GM12878 (cell line): ENCODE measurements at regions of chr7 and their contacts with region 1.

Region 1: DNA sequence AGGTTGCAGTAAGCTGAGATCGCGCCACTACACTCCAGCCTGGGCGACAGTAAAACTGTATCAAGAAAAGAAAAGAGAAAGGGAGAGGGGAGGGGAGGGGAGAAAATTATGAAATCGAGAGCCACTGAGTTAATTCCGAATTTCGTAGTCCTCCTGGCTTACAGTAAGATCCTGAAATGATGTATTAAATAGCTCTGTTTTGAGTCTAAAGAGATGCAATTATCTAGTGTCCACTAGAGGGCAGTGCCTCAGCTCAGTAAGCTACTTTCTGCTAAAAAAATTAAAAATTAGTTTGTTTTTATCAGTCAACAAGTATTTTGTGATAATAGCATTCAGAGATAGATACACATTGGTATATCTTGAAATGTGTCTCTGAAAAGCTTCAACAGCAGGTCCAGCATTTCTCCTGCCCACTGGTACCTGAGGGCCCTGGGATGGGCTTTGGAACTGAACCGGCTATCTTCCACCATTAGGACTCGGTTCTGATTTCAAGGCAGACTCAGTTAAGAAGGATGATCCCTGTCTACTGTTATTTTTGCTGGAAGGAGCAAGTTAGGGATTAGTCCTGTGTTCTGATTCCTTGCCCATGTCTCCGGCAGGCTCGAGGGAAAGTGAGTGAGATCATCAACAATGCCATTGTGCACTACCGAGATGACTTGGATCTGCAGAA is 19.5 kb downstream of the TSPAN33 start:
- DNase-seq: no peak
- ATAC-seq: peak; percentile 40
- H3K4me3 ChIP-seq: no peak overlapping the region
- H3K27ac ChIP-seq: no peak overlapping the region
- H3K4me1 ChIP-seq: peaks cover 57% of the 10 kb centered on the region
- H3K27me3 ChIP-seq: no peaks in the 10 kb centered on the region
- CTCF ChIP-seq: peak; percentile 61 to 78 (median 64)
- EP300 ChIP-seq: no peak
- POLR2A ChIP-seq: no peak
- RAD21 ChIP-seq: peak; percentile 60; the same call in 1 of the 2 replicates

Region 2: DNA sequence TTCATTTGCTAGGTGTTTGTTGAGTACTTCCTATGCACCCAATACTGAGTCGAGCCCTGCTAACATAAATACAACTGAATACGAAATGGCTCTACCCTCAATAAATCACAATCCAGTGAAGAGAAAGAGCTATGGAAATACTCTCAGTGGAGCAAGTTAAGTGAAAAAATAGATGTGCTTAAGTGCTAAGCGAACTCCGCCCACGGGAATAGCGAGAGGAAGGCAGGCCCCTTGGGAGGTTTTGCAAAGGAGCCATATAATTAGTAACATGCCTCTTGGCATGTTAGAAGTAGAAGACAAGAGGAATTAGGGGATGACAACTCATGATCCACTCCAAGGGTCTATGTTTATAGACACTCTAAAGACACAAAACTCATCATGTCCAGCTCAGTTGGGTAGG is 62.3 kb before region 1 on chr7:
- CTCF ChIA-PET with region 1: interaction called, 34 read pairs
- POLR2A ChIA-PET with region 1: interaction called, 4 read pairs
- RAD21 ChIA-PET with region 1: interaction called, 15 read pairs
- SMC1A ChIA-PET with region 1: interaction called, 10 read pairs
- in situ Hi-C with region 1: no loop called
- intact Hi-C with region 1: no loop called
- DNase-seq: no peak
- ATAC-seq: no peak; the same call in 2 of the 3 replicates
- H3K4me3 ChIP-seq: no peak overlapping the region
- H3K27ac ChIP-seq: no peak overlapping the region
- H3K4me1 ChIP-seq: peaks cover 21% of the 10 kb centered on the region
- H3K27me3 ChIP-seq: no peaks in the 10 kb centered on the region
- CTCF ChIP-seq: no peak
- EP300 ChIP-seq: no peak
- POLR2A ChIP-seq: no peak
- RAD21 ChIP-seq: no peak

Region 3: DNA sequence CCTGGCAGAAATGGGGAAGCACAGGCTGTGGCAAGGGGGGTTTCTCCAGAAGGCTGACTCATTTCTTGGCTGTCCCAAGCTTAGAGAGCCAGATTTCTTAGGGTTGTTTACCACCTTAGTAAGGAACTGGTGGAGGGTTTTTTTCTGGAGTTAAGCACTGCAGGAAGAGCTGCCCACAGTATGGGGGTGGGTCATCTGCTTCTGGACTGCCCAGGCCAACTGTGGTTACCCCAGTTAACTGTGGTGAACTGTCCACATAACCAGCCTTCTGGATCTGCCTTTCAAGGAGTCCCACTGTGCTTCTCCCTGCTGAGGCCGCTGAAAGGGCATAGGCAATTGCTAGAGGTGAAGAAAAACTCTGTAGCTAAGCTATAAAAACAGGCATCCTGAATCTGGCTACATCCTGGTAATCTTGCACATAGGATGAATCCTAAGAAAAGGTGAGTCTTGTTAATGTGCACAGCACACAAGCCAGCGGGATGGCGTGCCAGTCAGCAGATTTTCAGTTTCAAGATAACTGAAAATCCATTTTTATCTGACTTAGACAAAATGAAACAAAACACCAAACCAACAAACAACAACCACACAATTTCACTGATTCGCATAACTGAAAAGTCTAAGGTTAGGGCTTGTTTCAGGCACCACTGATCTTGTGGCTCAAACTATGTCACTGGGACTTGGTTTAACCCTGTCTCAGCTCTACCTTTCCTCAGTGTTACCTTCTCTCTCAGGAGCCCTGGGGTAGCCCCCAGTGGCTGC is 41.1 kb before region 1 on chr7:
- CTCF ChIA-PET with region 1: interaction called, 8 read pairs
- POLR2A ChIA-PET with region 1: interaction called, 9 read pairs
- RAD21 ChIA-PET with region 1: interaction called, 5 read pairs
- SMC1A ChIA-PET with region 1: interaction called, 21 read pairs
- in situ Hi-C with region 1: no loop called
- intact Hi-C with region 1: loop called (anchors 2 kb)
- DNase-seq: peak; percentile 95
- ATAC-seq: peak; percentile 91
- H3K4me3 ChIP-seq: peak overlapping the region; percentile 43
- H3K27ac ChIP-seq: peak overlapping the region; percentile 96
- H3K4me1 ChIP-seq: peaks cover 36% of the 10 kb centered on the region
- H3K27me3 ChIP-seq: no peaks in the 10 kb centered on the region
- CTCF ChIP-seq: no peak
- EP300 ChIP-seq: peak; percentile 98
- POLR2A ChIP-seq: no peak
- RAD21 ChIP-seq: no peak

Region 4: DNA sequence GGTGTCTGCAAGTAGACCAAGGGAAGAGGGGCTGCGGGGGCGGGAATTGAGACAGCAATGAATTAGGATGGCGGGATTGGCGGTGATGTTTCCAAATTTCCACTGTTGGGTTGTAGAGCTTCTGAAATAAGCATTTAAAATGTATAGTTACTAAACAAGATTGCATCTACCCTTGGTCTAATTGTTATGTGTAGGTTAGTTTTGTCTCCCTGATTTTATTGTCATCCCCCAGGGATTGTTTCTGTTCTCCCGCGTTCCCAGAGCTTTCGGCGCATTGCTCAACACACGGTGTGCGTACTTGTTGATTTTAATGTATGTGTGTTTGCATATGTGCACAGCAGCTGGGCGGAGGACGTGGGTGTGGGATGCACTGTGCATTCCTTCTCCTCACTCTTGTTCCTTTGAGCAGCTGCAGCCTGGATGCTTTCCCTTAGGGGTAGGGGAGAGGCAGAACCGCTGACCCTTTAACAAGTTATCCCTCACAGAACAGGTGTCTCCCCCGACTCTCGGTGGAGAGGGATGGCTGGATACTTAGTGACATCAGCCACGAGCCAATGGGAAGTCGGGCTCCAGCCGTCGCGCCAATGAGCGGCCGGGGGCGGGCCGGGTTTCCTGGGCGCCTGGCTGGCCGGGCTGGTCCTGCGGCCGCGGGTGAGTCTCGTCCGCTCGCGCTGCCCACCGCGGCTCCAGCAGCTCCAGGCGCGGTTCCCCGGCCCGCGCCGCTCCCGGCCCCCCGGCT is 19.7 kb before region 1 on chr7 and contains the start of gene TSPAN33:
- CTCF ChIA-PET with region 1: interaction called, 168 read pairs
- POLR2A ChIA-PET with region 1: interaction called, 32 read pairs
- RAD21 ChIA-PET with region 1: interaction called, 71 read pairs
- SMC1A ChIA-PET with region 1: interaction called, 83 read pairs
- in situ Hi-C with region 1: no loop called
- intact Hi-C with region 1: loop called (anchors 1 kb)
- DNase-seq: no peak
- ATAC-seq: peak; percentile 76
- H3K4me3 ChIP-seq: peak within 1 kb of the TSS; percentile 97
- H3K27ac ChIP-seq: peak within 1 kb of the TSS; percentile 92
- H3K4me1 ChIP-seq: peaks cover 28% of the 10 kb centered on the region
- H3K27me3 ChIP-seq: no peaks in the 10 kb centered on the region
- CTCF ChIP-seq: no peak
- EP300 ChIP-seq: no peak
- POLR2A ChIP-seq: peak; percentile 73
- RAD21 ChIP-seq: no peak
- polyA plus RNA-seq, gene TSPAN33: 17.8 to 30.0 TPM

Region 5: DNA sequence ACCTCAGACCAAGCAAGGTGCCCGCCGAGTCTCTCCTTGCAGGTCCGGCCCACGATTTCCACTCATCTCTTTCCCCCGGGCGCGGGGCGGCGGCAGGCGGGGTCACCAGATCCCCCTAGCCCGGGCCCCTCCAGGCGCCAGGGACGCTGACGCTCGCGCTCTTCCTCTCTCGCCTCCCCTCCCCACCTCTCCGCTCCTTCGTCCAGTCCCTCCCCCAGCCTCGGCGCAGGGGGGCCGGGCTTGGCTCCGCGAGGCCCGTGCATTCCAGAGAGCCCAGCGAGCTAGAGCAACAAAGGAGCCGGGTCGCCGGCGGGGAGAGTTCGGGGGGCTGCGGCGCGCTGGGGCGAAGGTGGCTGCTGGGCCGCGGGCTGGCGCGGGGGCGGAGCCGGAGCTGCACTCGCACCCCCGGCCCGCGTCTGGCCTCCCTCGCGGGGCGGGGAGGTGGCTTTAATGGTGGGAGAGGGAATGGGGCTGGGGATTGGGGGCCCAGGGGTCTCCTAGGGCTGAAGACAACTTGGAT is 24.4 kb after region 1 on chr7 and contains the start of gene SMO:
- CTCF ChIA-PET with region 1: interaction called, 11 read pairs
- POLR2A ChIA-PET with region 1: no interaction called
- RAD21 ChIA-PET with region 1: no interaction called
- SMC1A ChIA-PET with region 1: interaction called, 4 read pairs
- in situ Hi-C with region 1: no loop called
- intact Hi-C with region 1: no loop called
- DNase-seq: no peak
- ATAC-seq: peak; percentile 59
- H3K4me3 ChIP-seq: peak within 1 kb of the TSS; percentile 92
- H3K27ac ChIP-seq: no peak within 1 kb of the TSS
- H3K4me1 ChIP-seq: peaks cover 8% of the 10 kb centered on the region
- H3K27me3 ChIP-seq: 0 out of 4 replicates have a peak, but pooled peaks cover 0 to 1% of the 10 kb centered on the region in 2 experiments
- CTCF ChIP-seq: no peak
- EP300 ChIP-seq: no peak
- POLR2A ChIP-seq: peak; percentile 69
- RAD21 ChIP-seq: no peak
- polyA plus RNA-seq, gene SMO: 0.40 to 0.62 TPM

Region 6: GRCh38 chr7:129271500-129272355 is 107.7 kb after region 1 on chr7:
- CTCF ChIA-PET with region 1: interaction called, 12 read pairs
- POLR2A ChIA-PET with region 1: no interaction called
- RAD21 ChIA-PET with region 1: no interaction called
- SMC1A ChIA-PET with region 1: interaction called, 3 read pairs
- in situ Hi-C with region 1: no loop called
- intact Hi-C with region 1: no loop called
- DNase-seq: peak; percentile 21
- ATAC-seq: peak; percentile 98
- H3K4me3 ChIP-seq: no peak overlapping the region
- H3K27ac ChIP-seq: no peak overlapping the region
- H3K4me1 ChIP-seq: peaks cover 6% of the 10 kb centered on the region; the same call in 1 of the 2 replicates
- H3K27me3 ChIP-seq: no peaks in the 10 kb centered on the region
- CTCF ChIP-seq: peak; percentile 73 to 83 (median 74)
- EP300 ChIP-seq: no peak
- POLR2A ChIP-seq: no peak
- RAD21 ChIP-seq: peak; percentile 85